Left lung (tissue), 14 donors: ENCODE measurements at regions of chr4 and their contacts with region 1.

Region 1: GRCh38 chr4:78864405-78865024 is 74.7 kb downstream of the PAQR3 start:
- DNase-seq: peak in 2 of 4 donors; percentile 63 to 77
- ATAC-seq: peak; percentile 88
- H3K4me3 ChIP-seq: no peak overlapping the region
- H3K27ac ChIP-seq: no peak overlapping the region
- H3K4me1 ChIP-seq: no peaks in the 10 kb centered on the region
- H3K27me3 ChIP-seq: no peaks in the 10 kb centered on the region
- CTCF ChIP-seq: peak; percentile 64 to 83

Region 2: DNA sequence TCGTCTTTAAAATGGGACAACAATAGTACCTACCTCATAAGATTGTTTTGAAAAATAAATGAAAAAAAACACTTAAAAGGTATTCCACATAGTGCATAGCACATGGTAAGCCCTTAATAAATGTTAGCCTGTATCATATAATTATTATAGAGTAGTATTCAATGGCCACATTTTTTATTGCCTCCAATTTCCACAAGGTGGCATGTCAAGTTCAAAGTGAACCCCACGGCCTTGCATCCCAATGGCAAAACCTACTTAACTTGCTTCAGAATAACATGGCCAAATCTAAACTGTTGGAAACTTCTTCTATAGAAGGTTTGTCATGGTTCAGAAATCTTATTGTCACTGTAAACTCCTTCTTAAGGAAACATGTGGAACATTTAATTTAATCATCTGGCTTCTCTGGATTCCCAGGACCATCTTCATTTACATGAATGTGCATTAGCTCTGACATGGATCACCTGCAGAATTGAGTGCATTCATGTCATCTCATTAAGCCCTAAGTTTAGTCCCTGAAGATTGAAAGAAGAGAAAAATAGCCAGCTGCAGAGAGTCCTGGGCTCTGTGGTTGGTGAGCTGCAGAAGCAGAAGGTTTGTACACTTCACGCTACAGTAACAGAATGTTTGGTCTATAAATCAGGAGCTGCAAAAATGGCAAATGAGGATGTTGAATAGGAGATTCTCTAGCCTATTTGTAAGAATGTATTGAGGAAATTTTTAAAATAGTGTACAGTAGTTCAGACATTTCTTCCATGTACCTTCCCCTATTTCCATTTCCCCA is 251.9 kb before region 1 on chr4:
- intact Hi-C with region 1: loop called in 1 of 2 experiments (anchors 5 kb)
- DNase-seq: peak in 2 of 4 donors; percentile 30 to 61
- ATAC-seq: peak; percentile 79
- H3K4me3 ChIP-seq: no peak overlapping the region
- H3K27ac ChIP-seq: peak overlapping the region in 1 of 2 donors; percentile 51
- H3K4me1 ChIP-seq: peaks cover 0 to 35% of the 10 kb centered on the region in 2 donors
- H3K27me3 ChIP-seq: no peaks in the 10 kb centered on the region
- CTCF ChIP-seq: peak; percentile 43 to 44

Region 3: GRCh38 chr4:78809928-78810835 is 54.3 kb before region 1 on chr4:
- intact Hi-C with region 1: no loop called
- DNase-seq: peak in 1 of 4 donors; percentile 1
- ATAC-seq: no peak
- H3K4me3 ChIP-seq: no peak overlapping the region
- H3K27ac ChIP-seq: no peak overlapping the region
- H3K4me1 ChIP-seq: no peaks in the 10 kb centered on the region
- H3K27me3 ChIP-seq: no peaks in the 10 kb centered on the region
- CTCF ChIP-seq: no peak

Region 4: GRCh38 chr4:79155336-79155735 is 290.8 kb after region 1 on chr4:
- intact Hi-C with region 1: no loop called
- DNase-seq: no peak
- ATAC-seq: no peak
- H3K4me3 ChIP-seq: no peak overlapping the region
- H3K27ac ChIP-seq: no peak overlapping the region
- H3K4me1 ChIP-seq: no peaks in the 10 kb centered on the region
- H3K27me3 ChIP-seq: no peaks in the 10 kb centered on the region
- CTCF ChIP-seq: no peak